Activated T-helper 2 cell treated with anti-CD3 and anti-CD28 coated beads, Interferon-gamma antibody, Interleukin-2, Interleukin-4, amounts not matched to agents 10 μg/mL and 5 μg/mL and 100 μg/mL, durations not matched to agents 14 hours and 24 hours and 36 hours (primary cell): ENCODE measurements at regions of chr6 and their contacts with region 1.

Region 1: DNA sequence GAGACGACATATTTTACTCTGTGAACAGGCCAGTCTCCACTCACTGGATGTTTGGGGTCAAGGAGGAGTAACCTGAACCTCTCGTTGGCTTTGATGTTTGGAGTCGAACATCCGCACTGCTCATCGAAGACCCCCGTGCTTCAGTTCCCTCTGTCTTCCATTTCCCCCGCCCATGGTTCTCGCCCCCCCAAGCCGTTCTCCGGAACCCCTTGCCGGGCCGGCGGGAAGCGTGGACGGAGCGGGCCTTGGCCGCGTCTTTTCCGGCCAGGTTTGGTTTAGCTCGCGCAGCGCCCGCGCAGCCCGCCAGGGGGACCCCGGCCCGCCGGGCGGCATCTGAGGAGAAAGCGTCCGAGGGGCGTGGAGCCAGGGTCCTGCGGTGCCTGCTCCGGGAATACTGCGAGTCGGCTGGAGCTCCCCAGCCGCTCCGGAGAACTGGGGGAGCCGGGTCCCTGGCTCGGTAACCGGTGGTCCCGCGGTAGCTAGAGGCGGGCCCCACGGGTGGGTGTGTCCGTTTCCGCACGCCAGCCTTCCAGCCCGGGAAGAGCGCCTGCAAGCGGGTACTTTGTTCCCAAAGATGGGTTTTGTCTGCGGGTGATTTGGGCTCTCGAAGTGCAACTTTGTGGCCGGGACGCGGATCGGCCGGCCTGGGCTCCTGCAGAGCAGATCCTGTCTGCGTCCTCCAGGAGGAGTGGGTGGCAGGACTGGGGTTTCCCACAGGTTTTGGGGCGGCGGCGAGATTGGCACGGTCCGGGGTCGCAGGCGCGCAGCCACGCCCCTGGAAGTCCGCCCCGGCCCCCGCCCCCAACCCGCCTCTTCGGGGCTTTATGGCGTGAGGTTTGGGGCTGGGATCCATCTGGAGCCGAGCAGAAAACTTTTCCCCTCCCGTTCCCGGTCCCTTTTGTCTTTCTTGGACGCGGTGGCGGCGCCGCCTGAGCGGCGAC is at the start of gene TMEM200A:
- DNase-seq: peak; percentile 20
- H3K4me3 Mint-ChIP-seq: peak within 1 kb of the TSS; percentile 75
- H3K27ac Mint-ChIP-seq: peak within 1 kb of the TSS; percentile 12
- H3K4me1 Mint-ChIP-seq: peaks cover 20% of the 10 kb centered on the region
- H3K27me3 Mint-ChIP-seq: peaks cover 49% of the 10 kb centered on the region
- total RNA-seq, gene TMEM200A: 1.1 and 1.3 TPM in 2 replicates

Region 2: DNA sequence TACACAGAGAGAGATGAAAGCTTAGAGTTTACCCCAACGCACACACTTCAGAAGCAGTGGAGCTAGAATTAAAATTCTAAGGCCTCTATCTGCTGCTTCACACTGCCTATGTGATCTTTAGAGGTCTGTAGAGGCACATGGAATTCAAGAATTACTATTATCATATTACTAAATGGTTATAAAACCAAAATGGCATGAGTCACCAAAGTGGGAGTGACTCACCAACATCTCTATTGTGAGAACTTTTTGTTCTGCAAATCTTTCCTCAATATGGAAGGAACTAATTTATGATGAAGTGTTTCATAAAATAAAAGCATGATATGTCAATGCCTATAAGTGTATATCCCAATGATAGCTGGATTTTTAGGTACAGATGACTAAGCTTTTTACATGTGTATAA is 475.9 kb before region 1 on chr6:
- intact Hi-C with region 1: no loop called
- DNase-seq: no peak
- H3K4me3 Mint-ChIP-seq: no peak overlapping the region
- H3K27ac Mint-ChIP-seq: no peak overlapping the region
- H3K4me1 Mint-ChIP-seq: peaks cover 3% of the 10 kb centered on the region
- H3K27me3 Mint-ChIP-seq: peaks cover 8% of the 10 kb centered on the region

Region 3: GRCh38 chr6:130625825-130626527 is 260.5 kb after region 1 on chr6:
- intact Hi-C with region 1: loop called (anchors 5 kb)
- DNase-seq: no peak
- H3K4me3 Mint-ChIP-seq: peak overlapping the region; percentile 30
- H3K27ac Mint-ChIP-seq: peak overlapping the region; percentile 90
- H3K4me1 Mint-ChIP-seq: peaks cover 61% of the 10 kb centered on the region
- H3K27me3 Mint-ChIP-seq: no peaks in the 10 kb centered on the region

Region 4: GRCh38 chr6:130697995-130698535 is 332.6 kb after region 1 on chr6:
- intact Hi-C with region 1: loop called (anchors 1 kb)
- DNase-seq: peak; percentile 51
- H3K4me3 Mint-ChIP-seq: no peak overlapping the region
- H3K27ac Mint-ChIP-seq: peak overlapping the region; percentile 29
- H3K4me1 Mint-ChIP-seq: peaks cover 18% of the 10 kb centered on the region
- H3K27me3 Mint-ChIP-seq: no peaks in the 10 kb centered on the region

Region 5: GRCh38 chr6:132070356-132070755 is 1704.9 kb after region 1 on chr6:
- intact Hi-C with region 1: no loop called
- DNase-seq: no peak
- H3K4me3 Mint-ChIP-seq: no peak overlapping the region
- H3K27ac Mint-ChIP-seq: no peak overlapping the region
- H3K4me1 Mint-ChIP-seq: no peaks in the 10 kb centered on the region
- H3K27me3 Mint-ChIP-seq: peaks cover 2% of the 10 kb centered on the region